ENCODE measurements at regions of chr16 and their contacts with region 1.

Region 1: DNA sequence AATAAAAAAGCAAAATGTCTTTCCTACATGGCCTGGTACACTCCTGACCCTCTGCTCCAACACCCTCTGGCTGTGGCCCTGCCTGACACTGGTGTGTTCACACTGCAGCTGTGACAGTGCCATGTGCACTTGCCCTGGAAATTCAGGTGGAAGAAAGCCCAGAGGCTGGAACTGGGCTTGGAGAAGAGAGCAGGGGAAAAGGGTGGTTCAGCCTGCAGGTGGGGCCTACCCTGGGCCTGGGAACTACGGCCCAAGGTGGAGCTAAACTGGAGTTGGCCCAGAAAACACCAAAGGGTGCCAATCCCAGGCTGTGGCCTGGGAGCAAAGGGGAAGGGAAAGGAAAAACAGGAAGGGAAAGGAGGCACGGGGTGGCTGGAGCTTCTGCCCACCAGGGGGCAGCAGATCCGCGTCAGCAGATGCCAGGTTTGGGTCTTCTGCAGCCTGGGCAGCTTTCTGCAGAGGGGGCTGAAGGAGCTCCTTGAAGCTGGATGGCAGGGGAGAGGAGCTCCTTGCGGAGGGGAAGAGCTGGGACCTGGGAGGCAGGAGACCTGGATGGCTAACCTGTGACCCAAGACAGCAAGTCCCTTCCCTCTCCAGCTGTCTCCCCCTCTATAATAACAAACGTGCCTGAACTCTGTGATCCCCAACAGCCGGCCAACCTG is 15.4 kb upstream of the CTCF start:
- DNase-seq: peak; percentile 87

Region 2: DNA sequence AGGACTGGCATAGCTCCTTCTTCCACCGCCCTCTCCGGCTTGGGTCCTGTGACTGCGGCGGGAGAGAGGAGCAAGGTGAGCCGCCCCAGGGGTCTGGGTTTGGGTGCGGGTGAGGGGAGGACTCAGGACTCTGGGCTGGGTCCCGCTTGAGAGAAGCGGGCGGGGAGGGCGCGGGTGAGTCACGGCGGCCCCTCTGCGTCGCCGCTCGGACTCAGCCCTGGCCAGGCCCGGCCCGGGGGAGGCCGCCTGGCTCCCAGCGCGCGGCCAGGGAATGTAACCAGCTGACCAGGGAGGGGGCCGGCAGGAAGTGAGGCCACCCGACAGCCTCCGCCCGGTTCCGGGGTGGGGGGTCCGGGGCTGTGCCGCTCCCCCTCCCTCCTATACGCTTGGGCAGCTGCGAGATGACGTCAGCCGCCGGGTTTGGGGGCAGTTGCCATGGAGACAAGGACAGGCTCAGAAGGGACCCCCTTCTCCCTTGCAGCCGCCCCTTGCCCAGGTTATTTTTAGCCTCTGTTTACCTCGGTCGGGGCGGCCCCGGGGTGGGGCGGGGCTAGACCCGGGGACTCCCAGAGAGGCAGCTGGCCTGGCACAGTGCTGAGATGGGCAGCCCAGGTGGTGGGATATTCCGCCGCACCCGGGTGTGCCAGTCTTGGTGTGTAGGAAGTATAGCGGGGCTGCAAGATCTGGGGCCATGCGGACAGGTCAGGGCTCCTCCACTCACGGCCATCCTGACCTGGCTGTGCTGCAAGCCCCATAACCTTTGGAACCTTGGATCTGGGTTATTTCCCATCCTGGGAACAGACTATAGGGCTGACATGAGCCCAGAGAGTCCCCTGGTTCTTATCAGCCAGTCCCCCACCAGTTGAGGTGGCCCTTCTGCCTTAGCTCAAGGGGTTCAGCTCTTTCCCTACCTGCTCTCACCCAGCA is 16.6 kb before region 1 on chr16:
- CTCF ChIA-PET with region 1: interaction called, 12 read pairs
- POLR2A ChIA-PET with region 1: interaction called, 3 read pairs
- DNase-seq: no peak

Region 3: GRCh38 chr16:67641779-67642708 is 95.2 kb after region 1 on chr16:
- CTCF ChIA-PET with region 1: interaction called, 35 read pairs
- POLR2A ChIA-PET with region 1: interaction called, 3 read pairs
- DNase-seq: no peak

Measured in HEK293T (cell line).